Caco-2 (cell line): ENCODE measurements at regions of chr7 and their contacts with region 1.

Region 1: GRCh38 chr7:143965280-143965679 is 10.6 kb downstream of the OR2F1 start:
- DNase-seq: peak; percentile 82 to 90
- H3K4me3 ChIP-seq: no peak overlapping the region
- H3K4me3 Mint-ChIP-seq: peak overlapping the region; percentile 46
- H3K27ac Mint-ChIP-seq: peak overlapping the region; percentile 85
- H3K4me1 ChIP-seq: peaks cover 31% of the 10 kb centered on the region
- H3K4me1 Mint-ChIP-seq: peaks cover 20% of the 10 kb centered on the region
- H3K27me3 ChIP-seq: no peaks in the 10 kb centered on the region
- H3K27me3 Mint-ChIP-seq: no peaks in the 10 kb centered on the region
- CTCF ChIP-seq: no peak

Region 2: DNA sequence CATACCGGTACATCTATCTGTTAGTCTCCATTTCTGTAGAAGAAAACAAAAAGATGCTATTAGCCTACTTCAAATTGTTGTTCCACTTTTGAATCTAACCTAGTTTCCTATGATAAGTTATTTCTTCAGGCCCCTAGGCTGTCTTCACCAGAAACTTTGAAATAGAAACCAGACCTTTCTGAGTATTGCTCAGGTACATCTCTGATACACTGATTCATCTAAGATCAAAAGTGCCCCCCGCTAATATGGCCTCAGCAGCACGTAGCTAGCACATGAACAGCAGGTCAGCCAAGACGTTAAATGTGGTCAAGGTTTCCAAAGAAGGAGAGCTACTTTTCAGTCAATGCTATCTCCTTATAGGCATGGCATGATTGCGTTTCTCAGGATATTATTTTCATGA is 231.4 kb before region 1 on chr7:
- CTCF ChIA-PET with region 1: no interaction called
- POLR2A ChIA-PET with region 1: no interaction called
- intact Hi-C with region 1: no loop called
- DNase-seq: no peak
- H3K4me3 ChIP-seq: no peak overlapping the region
- H3K4me3 Mint-ChIP-seq: no peak overlapping the region
- H3K27ac Mint-ChIP-seq: no peak overlapping the region
- H3K4me1 ChIP-seq: no peaks in the 10 kb centered on the region
- H3K4me1 Mint-ChIP-seq: no peaks in the 10 kb centered on the region
- H3K27me3 ChIP-seq: no peaks in the 10 kb centered on the region
- H3K27me3 Mint-ChIP-seq: peaks cover 15% of the 10 kb centered on the region
- CTCF ChIP-seq: no peak

Region 3: DNA sequence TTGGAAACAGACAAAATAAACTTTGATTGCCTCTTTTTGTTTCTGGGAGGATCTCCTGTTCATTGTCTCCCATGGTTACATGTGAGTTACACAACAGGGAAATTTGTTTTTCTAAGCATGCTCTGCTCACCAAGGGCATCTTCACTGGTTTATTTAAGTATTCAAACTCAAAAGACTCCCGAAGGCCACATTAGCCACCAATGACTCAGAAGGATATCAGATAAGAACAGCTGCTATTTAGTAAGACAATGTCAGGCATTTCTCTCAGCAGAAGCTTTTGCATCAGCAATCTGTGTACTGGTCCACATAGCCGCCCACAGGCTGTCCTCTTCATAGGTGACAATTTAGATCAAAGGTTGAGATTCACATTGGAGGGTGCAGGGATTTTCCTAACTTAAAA is 54.2 kb after region 1 on chr7:
- CTCF ChIA-PET with region 1: no interaction called
- POLR2A ChIA-PET with region 1: no interaction called
- intact Hi-C with region 1: loop called (anchors 1 kb)
- DNase-seq: peak; percentile 69 to 77
- H3K4me3 ChIP-seq: no peak overlapping the region
- H3K4me3 Mint-ChIP-seq: no peak overlapping the region
- H3K27ac Mint-ChIP-seq: peak overlapping the region; percentile 69
- H3K4me1 ChIP-seq: peaks cover 35% of the 10 kb centered on the region
- H3K4me1 Mint-ChIP-seq: peaks cover 42% of the 10 kb centered on the region
- H3K27me3 ChIP-seq: no peaks in the 10 kb centered on the region
- H3K27me3 Mint-ChIP-seq: no peaks in the 10 kb centered on the region
- CTCF ChIP-seq: no peak

Region 4: DNA sequence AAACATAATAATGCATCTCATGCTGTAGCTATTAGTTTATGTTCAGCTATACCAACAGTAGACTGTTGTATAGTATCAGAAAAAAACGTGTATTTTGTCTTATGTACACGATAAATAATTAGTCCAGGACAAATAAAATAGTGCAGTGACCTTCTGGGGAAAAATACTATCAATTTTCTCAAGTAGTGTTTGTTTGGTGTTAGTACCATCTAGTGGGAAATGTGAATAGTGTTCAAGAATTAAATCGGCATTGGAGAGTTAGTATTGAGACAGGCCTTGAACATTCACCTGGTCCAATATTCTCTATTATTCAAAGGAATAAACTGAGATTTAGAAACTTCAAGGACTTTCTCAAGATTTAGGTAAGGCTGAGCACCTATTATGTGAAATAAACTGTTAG is 61.8 kb after region 1 on chr7:
- CTCF ChIA-PET with region 1: no interaction called
- POLR2A ChIA-PET with region 1: no interaction called
- intact Hi-C with region 1: loop called (anchors 2 kb)
- DNase-seq: no peak
- H3K4me3 ChIP-seq: no peak overlapping the region
- H3K4me3 Mint-ChIP-seq: no peak overlapping the region
- H3K27ac Mint-ChIP-seq: no peak overlapping the region
- H3K4me1 ChIP-seq: peaks cover 36% of the 10 kb centered on the region
- H3K4me1 Mint-ChIP-seq: peaks cover 27% of the 10 kb centered on the region
- H3K27me3 ChIP-seq: no peaks in the 10 kb centered on the region
- H3K27me3 Mint-ChIP-seq: no peaks in the 10 kb centered on the region
- CTCF ChIP-seq: peak; percentile 40 to 59